ENCODE measurements at regions of chr6 and their contacts with region 1.

Region 1: DNA sequence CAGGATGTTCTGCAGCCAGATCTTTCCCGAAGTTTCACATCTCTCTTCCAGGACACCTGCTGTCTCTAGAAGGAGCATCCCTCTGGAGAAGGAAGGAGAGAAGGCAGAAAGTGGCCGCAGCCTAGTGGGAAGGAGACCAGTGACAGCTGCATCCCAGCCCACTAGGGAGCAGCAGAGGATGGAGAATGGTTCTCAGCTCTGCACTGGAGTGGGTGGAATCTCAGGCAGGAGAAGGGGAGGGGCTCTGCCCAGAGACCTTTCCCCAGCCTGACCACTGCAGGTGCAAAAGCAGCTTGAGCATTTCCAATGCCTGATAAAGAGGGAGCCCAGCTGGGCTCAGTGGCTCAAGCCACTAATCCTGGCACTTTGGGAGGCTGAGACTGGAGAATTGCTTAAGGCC is 32.3 kb downstream of the NCR2 start:
- DNase-seq: peak; percentile 85
- H3K4me3 ChIP-seq: no peak overlapping the region; a peak in 1 of 4 replicates
- H3K27ac ChIP-seq: no peak overlapping the region
- H3K4me1 ChIP-seq: peaks cover 0 to 2% of the 10 kb centered on the region in 2 experiments; a peak in 1 of 4 replicates
- H3K27me3 ChIP-seq: peaks cover 56% of the 10 kb centered on the region
- CTCF ChIP-seq: peak; percentile 75
- EP300 ChIP-seq: no peak
- RAD21 ChIP-seq: peak; percentile 93

Region 2: GRCh38 chr6:41334482-41335040 is 33.1 kb before region 1 on chr6:
- CTCF ChIA-PET with region 1: interaction called, 27 read pairs
- POLR2A ChIA-PET with region 1: no interaction called
- DNase-seq: peak; percentile 41
- H3K4me3 ChIP-seq: no peak overlapping the region
- H3K27ac ChIP-seq: no peak overlapping the region
- H3K4me1 ChIP-seq: peaks cover 0 to 7% of the 10 kb centered on the region in 2 experiments; a peak in 2 of 4 replicates
- H3K27me3 ChIP-seq: peaks cover 9% of the 10 kb centered on the region
- CTCF ChIP-seq: no peak
- EP300 ChIP-seq: no peak
- RAD21 ChIP-seq: peak; percentile 24; the same call in 1 of the 2 replicates

Region 3: GRCh38 chr6:41411961-41412360 is 44.3 kb after region 1 on chr6:
- CTCF ChIA-PET with region 1: interaction called, 11 read pairs
- POLR2A ChIA-PET with region 1: no interaction called
- DNase-seq: no peak
- H3K4me3 ChIP-seq: no peak overlapping the region
- H3K27ac ChIP-seq: no peak overlapping the region
- H3K4me1 ChIP-seq: no peaks in the 10 kb centered on the region; a peak in 1 of 4 replicates
- H3K27me3 ChIP-seq: peaks cover 72% of the 10 kb centered on the region
- CTCF ChIP-seq: no peak
- EP300 ChIP-seq: no peak
- RAD21 ChIP-seq: no peak

Region 4: DNA sequence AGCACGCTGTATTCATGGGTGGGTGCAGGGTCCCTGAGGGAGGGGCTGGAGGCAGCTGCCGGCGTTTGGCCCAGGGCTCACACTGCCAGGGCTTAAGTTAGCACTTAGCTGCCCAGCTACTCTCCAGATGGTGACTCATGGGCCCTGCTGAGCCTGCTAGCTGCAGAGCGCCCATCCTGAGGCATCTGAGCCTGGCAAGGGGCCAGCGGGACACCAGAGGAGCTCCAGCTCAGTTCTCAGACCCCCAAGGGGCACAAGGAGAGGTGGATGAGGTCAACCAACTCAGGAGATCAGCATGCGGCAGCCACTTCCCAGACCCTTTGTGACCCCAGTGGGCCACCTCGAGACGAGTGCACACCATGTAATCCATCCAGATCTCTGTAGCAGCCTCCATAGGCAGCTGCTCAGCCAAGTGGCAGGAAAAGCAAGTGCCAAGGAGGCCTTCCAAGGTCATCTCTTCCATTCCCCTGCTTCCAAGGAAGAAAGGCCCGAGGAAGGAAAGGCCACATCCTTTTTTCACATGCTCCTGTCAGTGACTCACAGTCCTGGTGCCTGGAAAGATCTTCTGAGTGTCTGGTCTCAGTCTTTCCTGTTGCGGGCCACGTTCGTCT is 213.8 kb after region 1 on chr6:
- CTCF ChIA-PET with region 1: interaction called, 31 read pairs
- POLR2A ChIA-PET with region 1: no interaction called
- DNase-seq: peak; percentile 63
- H3K4me3 ChIP-seq: 0 out of 4 replicates have a peak overlapping the region, but pooled peaks of 1 of the 2 experiments have one; percentile 1
- H3K27ac ChIP-seq: peak overlapping the region; percentile 60 to 93
- H3K4me1 ChIP-seq: peaks cover 30 to 49% of the 10 kb centered on the region in 2 experiments; a peak in 3 of 4 replicates
- H3K27me3 ChIP-seq: no peaks in the 10 kb centered on the region
- CTCF ChIP-seq: no peak
- EP300 ChIP-seq: peak in 1 of 2 experiments; percentile 61; a peak in 1 of 4 replicates
- RAD21 ChIP-seq: no peak

Region 5: DNA sequence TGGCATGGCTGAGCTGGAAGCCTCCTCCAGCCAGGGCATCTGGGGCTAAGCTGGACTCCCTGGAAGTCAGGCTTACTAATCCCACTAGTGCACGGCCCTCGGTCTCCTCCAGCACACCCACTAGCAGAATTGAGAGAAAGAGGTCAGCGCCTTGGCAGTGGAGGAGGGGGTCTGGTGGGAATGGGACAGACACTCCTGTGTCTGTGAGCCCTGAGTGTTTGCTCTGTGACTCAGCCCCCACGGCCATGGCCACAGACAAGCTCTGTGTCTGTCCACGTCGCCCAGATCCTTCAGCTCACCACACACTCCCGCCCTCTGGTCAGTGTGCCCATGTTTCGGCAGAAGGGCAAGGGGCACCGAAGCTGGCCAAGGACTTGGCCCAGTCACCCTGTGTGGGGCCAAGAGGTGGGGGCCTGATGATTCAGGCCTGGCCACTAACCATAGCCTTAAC is 279.4 kb after region 1 on chr6:
- CTCF ChIA-PET with region 1: interaction called, 11 read pairs
- POLR2A ChIA-PET with region 1: no interaction called
- DNase-seq: no peak
- H3K4me3 ChIP-seq: no peak overlapping the region
- H3K27ac ChIP-seq: no peak overlapping the region
- H3K4me1 ChIP-seq: peaks cover 4 to 15% of the 10 kb centered on the region in 2 experiments; a peak in 2 of 4 replicates
- H3K27me3 ChIP-seq: no peaks in the 10 kb centered on the region
- CTCF ChIP-seq: no peak
- EP300 ChIP-seq: no peak
- RAD21 ChIP-seq: no peak

Region 6: GRCh38 chr6:41705996-41706835 is 338.5 kb after region 1 on chr6:
- CTCF ChIA-PET with region 1: interaction called, 15 read pairs
- POLR2A ChIA-PET with region 1: no interaction called
- DNase-seq: peak; percentile 80
- H3K4me3 ChIP-seq: peak overlapping the region in 1 of 2 experiments; percentile 13; a peak in 1 of 4 replicates
- H3K27ac ChIP-seq: peak overlapping the region; percentile 56 to 83; a peak in 3 of 4 replicates
- H3K4me1 ChIP-seq: peaks cover 17 to 31% of the 10 kb centered on the region in 2 experiments; a peak in 3 of 4 replicates
- H3K27me3 ChIP-seq: no peaks in the 10 kb centered on the region
- CTCF ChIP-seq: peak; percentile 86
- EP300 ChIP-seq: no peak
- RAD21 ChIP-seq: peak; percentile 54

Measured in SK-N-SH (cell line).